Ovary (tissue), 10 donors: ENCODE measurements at regions of chr1 and their contacts with region 1.

Region 1: DNA sequence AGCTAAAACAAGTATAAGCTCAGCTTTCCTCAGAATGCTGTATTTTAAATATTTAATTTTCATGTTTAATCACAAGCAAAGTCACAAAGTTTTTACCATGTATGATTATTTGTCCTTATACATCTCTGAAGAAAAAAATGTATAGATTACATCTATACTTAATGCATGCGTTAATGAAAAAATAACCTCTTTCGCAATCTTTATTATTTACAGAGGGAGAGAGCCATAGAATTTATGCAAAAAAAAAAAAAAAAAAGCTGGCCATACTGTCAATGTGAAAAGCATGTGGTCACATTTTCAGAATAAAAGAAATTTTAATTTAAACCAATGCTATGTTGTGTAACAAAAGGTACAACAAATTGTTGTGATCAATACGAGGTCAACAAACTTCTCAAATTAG is 148.2 kb downstream of the AKT3 start:
- DNase-seq: no peak
- H3K4me3 ChIP-seq: no peak overlapping the region
- H3K27ac ChIP-seq: no peak overlapping the region
- H3K4me1 ChIP-seq: peaks cover 1% of the 10 kb centered on the region
- H3K27me3 ChIP-seq: no peaks in the 10 kb centered on the region
- CTCF ChIP-seq: no peak
- EP300 ChIP-seq: no peak
- POLR2A ChIP-seq: no peak

Region 2: GRCh38 chr1:244029124-244029523 is 327.3 kb after region 1 on chr1:
- intact Hi-C with region 1: loop called in 1 of 4 experiments (anchors 5 kb)
- DNase-seq: no peak
- H3K4me3 ChIP-seq: no peak overlapping the region
- H3K27ac ChIP-seq: no peak overlapping the region
- H3K4me1 ChIP-seq: no peaks in the 10 kb centered on the region
- H3K27me3 ChIP-seq: no peaks in the 10 kb centered on the region
- CTCF ChIP-seq: no peak
- EP300 ChIP-seq: no peak
- POLR2A ChIP-seq: no peak